Activated naive CD4-positive, alpha-beta T cell treated with anti-CD3 and anti-CD28 coated beads for 36 hours (primary cell): ENCODE measurements at regions of chr1 and their contacts with region 1.

Region 1: DNA sequence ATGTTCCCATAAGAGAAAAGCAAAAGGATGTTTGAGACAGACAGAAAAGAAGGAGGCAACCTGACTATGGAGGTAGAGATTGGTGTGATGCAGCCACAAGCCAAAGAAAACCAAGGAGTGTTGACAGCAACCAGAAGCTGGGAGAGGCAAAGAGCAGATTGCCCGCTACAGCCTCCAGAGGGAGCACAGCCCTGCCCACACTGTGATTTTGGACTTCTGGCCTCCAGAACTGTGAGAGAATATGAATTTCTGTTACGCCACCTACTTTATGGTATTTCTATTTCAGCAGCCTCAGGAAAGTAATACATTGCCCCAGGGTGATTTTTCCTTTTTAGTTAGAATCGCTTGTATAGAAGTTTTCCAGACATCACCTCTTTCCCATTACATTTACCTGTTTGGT is 28.4 kb downstream of the SLAMF6 start:
- DNase-seq: no peak
- H3K4me3 Mint-ChIP-seq: no peak overlapping the region
- H3K27ac Mint-ChIP-seq: peak overlapping the region; percentile 48
- H3K4me1 Mint-ChIP-seq: peaks cover 57% of the 10 kb centered on the region
- H3K27me3 Mint-ChIP-seq: no peaks in the 10 kb centered on the region

Region 2: GRCh38 chr1:160483505-160484185 is 11.0 kb before region 1 on chr1:
- CTCF ChIA-PET with region 1: interaction called, 3 read pairs
- intact Hi-C with region 1: loop called (anchors 1 kb)
- DNase-seq: no peak
- H3K4me3 Mint-ChIP-seq: no peak overlapping the region
- H3K27ac Mint-ChIP-seq: peak overlapping the region; percentile 65
- H3K4me1 Mint-ChIP-seq: peaks cover 40% of the 10 kb centered on the region
- H3K27me3 Mint-ChIP-seq: no peaks in the 10 kb centered on the region

Region 3: DNA sequence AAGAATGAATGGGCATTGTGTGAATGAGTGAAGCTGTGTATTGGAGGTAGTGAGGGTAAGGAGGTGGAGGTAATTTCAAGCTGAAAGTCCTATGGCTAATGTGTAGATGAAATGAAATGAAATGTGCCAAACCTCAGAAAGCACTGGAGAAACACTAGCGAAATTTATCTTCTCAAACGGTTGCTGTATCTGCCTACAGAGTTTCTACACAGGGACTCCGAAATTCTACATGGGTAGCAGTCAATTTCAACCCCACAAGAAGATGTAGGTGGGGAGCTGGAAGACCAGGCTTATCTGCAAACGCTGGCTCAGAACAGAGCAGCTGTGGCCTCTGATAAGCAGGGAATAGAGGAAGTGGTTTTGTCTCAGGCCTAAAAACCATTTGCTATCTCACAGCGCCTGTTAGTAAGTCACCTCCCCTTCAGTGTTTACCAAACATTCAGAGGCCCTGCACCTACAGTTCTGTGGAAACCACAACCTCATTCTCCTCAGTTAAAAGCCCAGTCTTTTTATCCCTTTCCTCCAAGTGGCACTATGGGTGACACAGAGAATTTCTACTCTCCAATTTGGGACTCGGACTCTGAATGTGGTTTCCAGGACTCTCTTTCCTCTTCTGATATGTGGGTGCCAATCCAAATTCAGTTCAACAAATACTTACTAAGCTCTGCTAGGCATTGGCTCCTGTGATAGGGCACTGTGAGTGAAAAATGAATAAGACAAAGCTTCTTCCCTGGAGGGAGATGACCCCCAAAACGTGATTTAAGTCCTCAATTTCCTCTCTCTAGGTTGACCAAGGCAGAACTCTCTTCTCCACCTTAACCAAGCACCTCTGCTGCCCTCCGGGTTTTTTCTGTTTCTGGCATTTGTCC is 45.6 kb after region 1 on chr1:
- CTCF ChIA-PET with region 1: no interaction called
- intact Hi-C with region 1: no loop called
- DNase-seq: peak; percentile 73
- H3K4me3 Mint-ChIP-seq: peak overlapping the region; percentile 52
- H3K27ac Mint-ChIP-seq: peak overlapping the region; percentile 96
- H3K4me1 Mint-ChIP-seq: peaks cover 55% of the 10 kb centered on the region
- H3K27me3 Mint-ChIP-seq: no peaks in the 10 kb centered on the region

Region 4: GRCh38 chr1:160579216-160579701 is 84.6 kb after region 1 on chr1 and contains the start of gene CD84:
- CTCF ChIA-PET with region 1: no interaction called
- intact Hi-C with region 1: no loop called
- DNase-seq: no peak
- H3K4me3 Mint-ChIP-seq: peak within 1 kb of the TSS; percentile 74
- H3K27ac Mint-ChIP-seq: peak within 1 kb of the TSS; percentile 91
- H3K4me1 Mint-ChIP-seq: peaks cover 78% of the 10 kb centered on the region
- H3K27me3 Mint-ChIP-seq: no peaks in the 10 kb centered on the region
- total RNA-seq, gene CD84: 8.6 to 9.2 TPM